Adrenal gland (tissue), 19 donors: ENCODE measurements at regions of chr15 and their contacts with region 1.

Region 1: DNA sequence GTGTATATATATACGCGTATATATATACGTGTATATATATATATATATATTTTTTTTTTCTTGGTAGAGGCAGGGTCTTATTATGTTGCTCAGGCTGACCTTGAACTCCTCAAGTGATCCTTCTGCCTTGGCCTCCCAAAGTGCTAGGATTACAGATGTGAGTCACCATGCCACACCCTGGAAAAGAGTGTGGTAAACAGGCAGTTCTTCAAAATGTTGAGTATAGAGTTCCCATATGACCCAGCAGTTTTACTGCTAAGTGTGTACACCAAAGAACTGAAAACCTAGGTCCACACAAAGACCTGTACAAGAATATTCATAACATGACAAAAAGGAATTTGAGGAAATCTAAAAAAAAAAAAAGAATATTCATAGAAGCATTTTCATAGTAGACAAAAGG is 71.8 kb upstream of the GCNT3 start:
- DNase-seq: no peak
- H3K4me3 ChIP-seq: no peak overlapping the region
- H3K27ac ChIP-seq: no peak overlapping the region
- H3K4me1 ChIP-seq: no peaks in the 10 kb centered on the region
- H3K27me3 ChIP-seq: no peaks in the 10 kb centered on the region
- CTCF ChIP-seq: no peak
- POLR2A ChIP-seq: no peak

Region 2: DNA sequence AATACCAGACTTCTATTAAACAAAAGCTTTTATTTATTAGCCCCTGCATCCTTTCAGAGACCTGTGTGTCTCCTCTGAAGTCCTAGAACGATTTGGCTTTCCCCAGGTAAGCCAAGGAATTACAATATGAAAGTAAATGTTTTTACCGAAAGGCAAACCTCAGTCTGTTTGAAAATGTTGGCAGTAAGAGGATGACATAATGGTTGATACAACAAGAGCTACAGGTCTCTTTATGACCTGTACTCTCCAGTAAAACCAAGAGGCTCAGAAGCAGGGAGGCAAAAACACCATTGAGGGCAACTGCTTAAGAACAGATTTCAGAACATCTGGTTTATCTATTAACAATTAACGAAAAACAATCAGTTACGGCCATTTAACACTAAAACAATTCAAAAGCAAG is 898.1 kb before region 1 on chr15:
- intact Hi-C with region 1: no loop called
- DNase-seq: no peak
- H3K4me3 ChIP-seq: no peak overlapping the region
- H3K27ac ChIP-seq: no peak overlapping the region
- H3K4me1 ChIP-seq: no peaks in the 10 kb centered on the region
- H3K27me3 ChIP-seq: no peaks in the 10 kb centered on the region
- CTCF ChIP-seq: no peak
- POLR2A ChIP-seq: no peak

Region 3: DNA sequence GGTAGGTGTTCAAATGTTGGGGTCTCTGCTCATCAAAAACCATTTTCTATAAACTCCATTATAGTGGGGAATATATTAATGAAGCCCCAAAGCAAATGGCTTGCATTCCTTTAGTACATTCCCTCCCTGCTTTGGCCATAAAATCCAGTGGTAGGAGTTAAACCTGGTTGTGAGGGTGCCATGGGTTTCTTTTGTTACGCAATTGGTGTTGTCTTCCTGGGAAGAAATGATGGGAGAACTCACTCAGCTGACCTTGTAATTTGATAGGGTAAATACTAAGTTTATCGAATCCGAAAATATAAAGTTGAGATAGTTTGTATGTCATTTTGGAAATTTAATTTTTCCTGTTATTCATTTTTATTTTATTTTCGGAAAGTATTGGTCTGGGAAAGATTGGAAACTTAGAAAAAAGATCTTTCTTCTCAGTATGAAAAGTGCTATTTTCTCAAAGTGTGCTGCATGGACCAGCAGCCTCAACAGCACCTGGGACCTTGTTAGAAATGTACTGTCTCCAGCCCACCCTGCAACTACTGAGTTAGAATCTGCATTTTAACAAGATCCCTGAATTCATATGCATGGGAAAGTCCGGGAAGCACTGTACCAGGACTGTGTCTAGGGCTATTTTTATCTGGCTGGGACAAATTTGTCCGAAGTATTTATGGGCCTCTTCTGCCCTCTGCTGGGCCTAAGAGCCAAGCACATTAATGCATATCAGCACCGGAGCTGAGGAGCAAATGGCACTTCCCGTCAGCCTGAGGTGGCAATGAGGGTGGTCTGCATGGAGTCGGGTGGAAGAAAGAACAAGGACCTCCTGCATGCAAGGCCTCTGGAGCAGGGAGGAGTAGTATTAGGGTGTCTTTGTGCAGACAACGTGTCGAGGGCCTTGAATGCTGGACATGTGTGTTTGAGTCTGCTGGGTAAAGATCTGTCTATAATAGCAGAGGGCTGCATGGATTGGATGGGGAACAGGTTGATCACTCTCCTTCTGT is 47.1 kb before region 1 on chr15:
- intact Hi-C with region 1: no loop called
- DNase-seq: peak; percentile 47 to 84 (median 61)
- H3K4me3 ChIP-seq: no peak overlapping the region
- H3K27ac ChIP-seq: no peak overlapping the region
- H3K4me1 ChIP-seq: no peaks in the 10 kb centered on the region
- H3K27me3 ChIP-seq: no peaks in the 10 kb centered on the region
- CTCF ChIP-seq: peak; percentile 73 to 92 (median 85)
- POLR2A ChIP-seq: no peak

Region 4: DNA sequence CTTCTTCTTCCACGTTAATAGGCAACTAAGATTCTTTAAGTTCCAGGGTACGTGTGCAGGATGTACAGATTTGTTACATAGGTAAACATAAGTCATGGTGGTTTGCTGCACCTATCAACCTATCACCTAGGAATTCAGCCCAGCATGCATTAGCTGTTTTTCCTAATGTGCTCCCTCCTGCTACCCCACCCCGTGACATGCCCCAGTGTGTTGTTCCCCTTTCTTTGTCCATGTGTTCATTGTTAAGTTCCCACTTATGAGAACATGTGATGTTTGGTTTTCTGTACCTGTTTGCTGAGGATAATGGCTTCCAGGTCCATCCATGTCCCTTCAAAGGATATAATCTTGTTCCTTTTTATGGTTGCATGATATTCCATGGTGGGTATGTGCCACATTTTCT is 96.4 kb after region 1 on chr15:
- intact Hi-C with region 1: loop called in 1 of 2 experiments (anchors 5 kb)
- DNase-seq: no peak
- H3K4me3 ChIP-seq: no peak overlapping the region
- H3K27ac ChIP-seq: no peak overlapping the region
- H3K4me1 ChIP-seq: no peaks in the 10 kb centered on the region
- H3K27me3 ChIP-seq: no peaks in the 10 kb centered on the region
- CTCF ChIP-seq: no peak
- POLR2A ChIP-seq: no peak